AG04450 (cell line): ENCODE measurements at regions of chr3 and their contacts with region 1.

Region 1: DNA sequence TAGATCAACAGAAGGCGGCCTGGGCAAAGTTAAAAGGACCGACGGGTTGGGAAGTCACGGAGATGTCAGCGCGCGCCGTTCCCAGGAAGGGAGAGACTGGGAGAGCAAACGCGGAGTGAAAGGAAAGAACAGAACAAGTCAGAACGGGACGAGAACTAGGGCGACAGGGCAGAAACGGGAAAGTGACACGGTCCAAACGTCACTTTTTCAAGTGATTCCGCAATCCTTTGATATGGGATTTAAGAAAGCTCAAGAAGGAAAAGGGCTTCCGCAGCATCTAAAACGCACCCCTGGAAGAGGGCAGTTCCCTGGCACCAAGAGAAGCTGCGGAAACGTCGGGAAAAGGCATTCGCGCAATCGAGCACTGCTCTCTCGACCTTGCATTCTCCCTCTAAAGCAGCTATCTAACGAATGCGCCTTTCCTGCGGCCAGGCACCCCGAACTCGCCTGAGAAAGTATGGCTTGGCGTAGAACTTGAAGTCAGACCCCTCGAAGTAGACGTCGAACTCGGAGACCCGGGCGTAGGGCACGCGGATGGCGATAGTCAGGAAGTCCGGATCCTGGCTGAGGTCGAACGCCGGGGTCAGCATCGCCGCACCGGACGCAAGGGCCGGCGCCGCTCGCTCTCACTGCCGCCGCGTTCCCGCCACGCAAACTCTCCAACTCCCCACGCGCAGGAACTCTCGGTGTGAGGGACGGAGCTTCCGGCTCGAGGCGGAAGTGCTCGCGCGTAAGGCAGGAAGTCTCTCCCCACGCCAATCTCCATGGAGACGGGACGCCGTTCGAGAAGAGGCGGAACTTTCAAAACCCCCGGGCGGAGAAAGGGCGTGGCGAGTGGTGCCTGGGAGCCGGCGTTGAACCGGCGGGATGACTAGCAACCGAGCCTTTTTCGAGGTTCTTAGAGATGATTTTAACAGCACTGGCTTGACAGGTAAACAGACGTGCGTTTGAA is at the start of gene SHQ1:
- DNase-seq: peak; percentile 76
- H3K4me3 ChIP-seq: peak within 1 kb of the TSS; percentile 98
- H3K27ac ChIP-seq: peak within 1 kb of the TSS; percentile 68
- H3K27me3 ChIP-seq: no peaks in the 10 kb centered on the region
- CTCF ChIP-seq: no peak
- polyA plus RNA-seq, gene SHQ1: 14.1 and 16.6 TPM in 2 replicates

Region 2: DNA sequence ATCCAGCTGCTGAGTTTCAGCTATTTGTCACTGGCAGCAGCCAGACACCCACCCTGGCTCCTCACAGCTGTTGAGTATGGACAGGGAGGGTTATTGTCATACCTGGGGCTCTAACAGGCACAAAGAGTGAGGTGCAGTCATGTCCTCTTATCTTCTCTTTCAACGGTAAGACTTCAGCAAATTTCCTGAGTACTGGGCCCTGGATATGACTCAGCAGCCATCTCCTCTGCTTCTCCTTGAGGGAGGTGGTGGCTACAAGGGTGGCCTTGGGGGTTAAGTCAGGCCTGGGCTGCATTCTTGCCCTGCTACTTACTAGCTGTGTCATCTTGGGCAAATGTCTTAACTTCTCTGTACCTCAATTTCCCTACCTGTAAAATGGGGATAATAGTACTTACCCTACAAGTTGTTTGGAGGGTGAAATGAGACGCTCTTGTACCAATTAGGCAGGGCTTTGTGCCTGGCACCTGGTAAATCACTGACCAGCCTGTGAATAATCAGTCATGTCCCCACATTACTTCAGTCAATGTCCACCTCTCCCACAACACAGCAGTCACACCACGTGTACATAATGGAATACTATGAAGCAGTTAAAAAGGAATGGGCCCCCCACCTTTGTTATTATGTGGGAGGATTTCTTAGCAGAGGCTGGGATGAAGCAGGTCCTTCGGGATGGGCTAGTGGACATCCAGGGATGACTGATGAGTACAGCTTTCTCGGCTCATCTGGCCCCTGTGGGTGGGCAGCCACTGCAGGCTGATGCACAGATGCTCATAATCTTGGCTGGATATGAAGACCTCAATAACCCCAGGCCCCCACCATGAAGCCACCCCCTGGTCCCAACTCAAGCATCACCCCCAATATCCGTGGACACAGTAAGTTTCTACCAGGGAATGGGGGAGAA is 528.6 kb before region 1 on chr3:
- CTCF ChIA-PET with region 1: no interaction called
- POLR2A ChIA-PET with region 1: no interaction called
- DNase-seq: no peak
- H3K4me3 ChIP-seq: no peak overlapping the region
- H3K27ac ChIP-seq: peak overlapping the region; percentile 3
- H3K27me3 ChIP-seq: no peaks in the 10 kb centered on the region
- CTCF ChIP-seq: no peak

Region 3: GRCh38 chr3:72738752-72739530 is 109.1 kb before region 1 on chr3:
- CTCF ChIA-PET with region 1: no interaction called
- POLR2A ChIA-PET with region 1: no interaction called
- DNase-seq: no peak
- H3K4me3 ChIP-seq: peak overlapping the region; percentile 50
- H3K27ac ChIP-seq: no peak overlapping the region
- H3K27me3 ChIP-seq: peaks cover 13% of the 10 kb centered on the region
- CTCF ChIP-seq: no peak

Region 4: DNA sequence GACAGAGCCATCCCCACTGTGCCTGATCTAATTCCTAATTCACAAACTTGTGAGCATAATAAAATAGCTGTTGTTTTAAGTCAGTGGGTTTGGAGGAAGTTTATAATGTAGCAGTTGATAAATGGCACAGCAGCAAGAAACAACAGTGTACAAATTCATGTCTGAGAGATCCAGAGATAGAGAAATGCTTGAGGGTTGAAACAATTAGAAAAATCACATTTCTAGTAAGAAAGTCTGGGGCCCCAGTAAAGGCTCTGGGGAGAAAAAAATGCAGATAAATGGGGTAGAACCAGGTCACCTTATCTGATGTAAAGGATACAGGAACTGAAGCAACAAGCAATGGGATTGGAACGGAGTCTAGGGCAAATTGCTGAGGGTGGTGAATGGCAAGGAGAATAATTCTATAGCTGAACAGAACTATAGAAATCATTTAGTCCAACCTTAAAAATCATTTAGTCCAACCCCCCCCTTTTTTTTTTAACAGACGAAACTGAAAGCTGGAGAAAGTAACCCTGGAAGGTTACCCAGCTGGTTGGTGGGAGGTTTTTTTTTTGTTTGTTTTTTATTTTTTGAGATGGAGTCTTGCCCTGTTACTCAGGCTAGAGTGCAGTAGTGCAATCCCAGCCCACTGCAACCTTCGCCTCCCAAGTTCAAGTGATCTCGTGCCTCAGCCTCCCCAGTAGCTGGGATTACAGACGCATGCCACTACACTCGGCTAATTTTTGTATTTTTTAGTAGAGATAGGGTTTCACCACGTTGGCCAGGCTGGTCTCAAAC is 14.5 kb after region 1 on chr3:
- CTCF ChIA-PET with region 1: interaction called, 24 read pairs
- POLR2A ChIA-PET with region 1: no interaction called
- DNase-seq: no peak
- H3K4me3 ChIP-seq: no peak overlapping the region
- H3K27ac ChIP-seq: no peak overlapping the region
- H3K27me3 ChIP-seq: peaks cover 2% of the 10 kb centered on the region
- CTCF ChIP-seq: no peak

Region 5: GRCh38 chr3:72887705-72888545 is 39.9 kb after region 1 on chr3 and contains the start of gene GXYLT2:
- CTCF ChIA-PET with region 1: interaction called, 17 read pairs
- POLR2A ChIA-PET with region 1: interaction called, 5 read pairs
- DNase-seq: no peak
- H3K4me3 ChIP-seq: peak within 1 kb of the TSS; percentile 75
- H3K27ac ChIP-seq: peak within 1 kb of the TSS; percentile 92
- H3K27me3 ChIP-seq: no peaks in the 10 kb centered on the region
- CTCF ChIP-seq: no peak
- polyA plus RNA-seq, gene GXYLT2: 36.0 and 42.5 TPM in 2 replicates

Region 6: GRCh38 chr3:72951259-72951722 is 103.3 kb after region 1 on chr3:
- CTCF ChIA-PET with region 1: interaction called, 11 read pairs
- POLR2A ChIA-PET with region 1: no interaction called
- DNase-seq: no peak
- H3K4me3 ChIP-seq: no peak overlapping the region
- H3K27ac ChIP-seq: no peak overlapping the region
- H3K27me3 ChIP-seq: no peaks in the 10 kb centered on the region
- CTCF ChIP-seq: no peak

Region 7: DNA sequence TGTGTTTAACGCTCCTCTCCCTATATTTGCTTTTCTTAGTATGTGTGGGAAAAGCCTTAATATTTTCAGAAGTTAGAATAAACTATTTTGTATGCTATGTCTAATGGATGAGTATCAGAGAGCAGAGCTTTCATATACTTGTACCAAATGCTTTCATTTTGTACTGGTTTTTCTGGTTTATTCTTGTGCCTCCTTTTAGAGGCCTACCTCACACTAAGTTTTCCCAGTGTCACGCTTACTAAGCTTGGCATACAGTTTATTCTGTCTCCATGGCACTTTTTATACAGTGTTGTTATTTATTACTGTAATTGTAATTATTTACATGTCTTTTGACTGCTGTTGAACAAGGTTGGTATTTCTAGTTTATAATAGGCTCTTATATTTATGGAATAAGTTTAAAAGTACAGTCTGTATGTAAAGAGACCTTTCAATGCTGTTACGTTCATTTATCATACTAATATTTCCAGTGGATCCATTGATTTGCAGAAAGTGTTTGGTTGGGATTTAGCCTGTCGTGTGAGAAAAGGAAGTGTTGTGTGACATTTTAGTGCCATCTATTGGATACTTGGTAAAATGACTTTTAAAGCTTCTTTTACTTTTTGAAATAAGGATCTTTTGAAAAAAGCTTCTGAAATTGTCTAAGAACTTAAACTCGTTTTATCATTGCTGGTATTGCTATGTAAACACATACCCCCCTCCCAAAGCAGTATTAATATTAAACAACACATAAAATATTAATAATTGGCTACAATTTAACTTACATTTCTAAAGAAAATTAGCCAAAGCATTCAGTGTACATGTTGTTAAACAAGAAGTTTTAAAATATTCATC is 208.2 kb after region 1 on chr3:
- CTCF ChIA-PET with region 1: interaction called, 80 read pairs
- POLR2A ChIA-PET with region 1: no interaction called
- DNase-seq: no peak
- H3K4me3 ChIP-seq: no peak overlapping the region
- H3K27ac ChIP-seq: no peak overlapping the region
- H3K27me3 ChIP-seq: no peaks in the 10 kb centered on the region
- CTCF ChIP-seq: peak; percentile 52